GM10248 (cell line): ENCODE measurements at regions of chr5 and their contacts with region 1.

Region 1: DNA sequence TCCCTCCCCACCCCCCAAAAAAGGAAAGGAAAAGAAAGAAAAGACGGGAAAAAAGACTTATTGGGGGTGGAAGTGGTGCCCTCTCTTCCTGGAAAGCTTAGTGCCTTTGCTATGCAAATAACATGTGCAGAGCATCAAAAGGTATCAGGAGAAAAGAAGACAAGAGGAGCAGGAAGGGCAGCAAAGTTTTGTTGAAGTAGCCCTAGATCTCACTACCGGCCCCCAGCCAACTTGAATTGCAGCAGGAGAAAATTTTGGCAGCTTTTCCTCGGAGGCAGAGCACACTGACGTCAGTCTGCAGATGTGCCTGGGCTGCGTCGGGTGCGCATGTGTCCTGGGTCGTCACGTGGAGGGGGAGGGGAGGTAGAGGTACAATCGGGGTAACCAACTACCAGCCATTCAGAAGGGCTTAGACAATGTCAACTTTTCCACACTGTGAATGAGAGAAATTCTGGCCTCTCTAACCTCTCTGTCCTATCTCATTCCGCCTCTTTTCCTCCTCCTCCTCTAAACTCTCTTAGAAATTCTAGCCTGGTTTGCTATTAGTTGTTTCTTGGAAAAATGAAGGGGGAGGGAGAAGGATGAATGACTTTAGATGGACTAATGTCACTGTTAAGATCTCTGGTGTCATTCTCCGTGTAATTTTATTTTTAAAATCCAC is at the start of gene ADAMTS6:
- DNase-seq: peak; percentile 67
- CTCF ChIP-seq: no peak

Region 2: GRCh38 chr5:64634997-64635686 is 846.6 kb before region 1 on chr5:
- CTCF ChIA-PET with region 1: interaction called, 16 read pairs
- POLR2A ChIA-PET with region 1: no interaction called
- DNase-seq: peak; percentile 15
- CTCF ChIP-seq: peak; percentile 83

Region 3: GRCh38 chr5:64811050-64811640 is 670.6 kb before region 1 on chr5:
- CTCF ChIA-PET with region 1: interaction called, 48 read pairs
- POLR2A ChIA-PET with region 1: no interaction called
- DNase-seq: peak; percentile 24
- CTCF ChIP-seq: peak; percentile 61

Region 4: DNA sequence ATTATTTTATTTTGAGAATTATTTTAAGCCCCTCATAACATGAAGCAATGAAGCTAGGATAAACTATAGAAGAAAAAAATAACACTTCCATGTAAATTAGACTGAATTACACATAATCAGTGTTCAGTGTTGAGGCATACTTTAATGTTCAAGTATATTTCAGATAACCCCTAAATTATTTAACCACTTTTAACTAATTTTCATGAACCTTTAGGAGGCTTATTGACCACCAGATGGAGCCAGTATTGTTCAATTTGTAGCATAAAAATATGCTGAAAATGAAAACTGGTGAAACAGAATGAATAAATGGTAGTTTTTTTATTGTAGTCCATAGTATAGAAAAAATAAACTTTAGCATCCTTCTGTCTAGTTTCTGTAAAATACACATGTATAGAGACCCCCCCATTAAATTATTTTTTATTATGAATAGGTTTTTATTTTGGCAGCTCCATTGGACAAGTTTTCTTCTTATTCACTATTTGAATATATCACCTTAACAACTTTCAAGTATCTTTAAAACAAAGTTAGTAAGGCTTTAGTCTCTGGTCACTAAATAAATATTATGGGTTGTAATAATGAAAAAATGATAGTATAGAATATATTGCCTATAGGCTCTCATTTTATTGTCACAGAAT is 522.9 kb before region 1 on chr5:
- CTCF ChIA-PET with region 1: interaction called, 15 read pairs
- POLR2A ChIA-PET with region 1: interaction called, 4 read pairs
- DNase-seq: no peak
- CTCF ChIP-seq: peak; percentile 44

Region 5: GRCh38 chr5:65102828-65103711 is 378.7 kb before region 1 on chr5:
- CTCF ChIA-PET with region 1: interaction called, 17 read pairs
- POLR2A ChIA-PET with region 1: interaction called, 3 read pairs
- DNase-seq: peak; percentile 79
- CTCF ChIP-seq: peak; percentile 30

Region 6: DNA sequence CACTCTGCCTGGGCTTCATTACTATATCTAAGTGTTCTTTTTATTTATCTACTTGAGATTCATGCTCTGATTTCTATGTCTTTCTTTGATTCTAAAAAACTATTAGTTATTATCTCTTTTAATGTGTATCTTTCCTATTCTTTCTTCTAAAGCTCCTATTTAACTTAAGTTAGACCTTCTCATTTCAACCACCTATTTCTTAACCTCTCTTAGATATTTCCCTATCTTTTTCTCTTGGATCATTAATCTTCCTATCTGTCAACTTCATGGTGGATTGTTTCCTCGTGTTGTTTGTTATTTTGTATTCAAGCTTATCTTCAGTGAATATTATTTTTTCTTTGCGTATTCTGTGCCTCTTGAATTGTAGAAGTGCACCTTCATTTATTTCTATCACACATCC is 202.2 kb before region 1 on chr5:
- CTCF ChIA-PET with region 1: no interaction called
- POLR2A ChIA-PET with region 1: no interaction called
- DNase-seq: no peak
- CTCF ChIP-seq: no peak

Region 7: DNA sequence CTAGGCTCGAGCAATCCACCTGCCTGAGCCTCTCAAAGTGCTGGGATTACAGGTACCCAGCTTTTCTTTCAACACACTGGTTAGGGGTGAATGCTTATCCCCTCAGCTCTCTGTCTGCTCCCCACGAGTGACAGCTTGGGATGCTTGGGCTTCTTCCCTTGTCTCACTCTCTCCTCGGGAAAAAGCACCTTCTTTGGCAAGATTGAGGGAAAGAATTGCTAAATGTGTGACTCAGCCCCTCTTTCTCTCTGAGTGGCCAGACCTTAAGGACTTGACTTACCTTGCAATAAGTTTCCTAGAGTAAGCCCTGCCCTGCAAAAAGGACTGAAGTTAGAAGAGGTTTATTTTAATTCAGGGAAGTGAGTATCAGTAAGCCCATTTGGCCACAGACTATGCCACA is 376.6 kb after region 1 on chr5:
- CTCF ChIA-PET with region 1: no interaction called
- POLR2A ChIA-PET with region 1: no interaction called
- DNase-seq: no peak
- CTCF ChIP-seq: no peak